BJ (cell line): ENCODE measurements at regions of chr3 and their contacts with region 1.

Region 1: GRCh38 chr3:138694287-138695007 is 85.9 kb downstream of the FAIM start:
- DNase-seq: peak; percentile 99
- H3K4me3 ChIP-seq: no peak overlapping the region
- H3K27me3 ChIP-seq: no peaks in the 10 kb centered on the region
- CTCF ChIP-seq: no peak

Region 2: DNA sequence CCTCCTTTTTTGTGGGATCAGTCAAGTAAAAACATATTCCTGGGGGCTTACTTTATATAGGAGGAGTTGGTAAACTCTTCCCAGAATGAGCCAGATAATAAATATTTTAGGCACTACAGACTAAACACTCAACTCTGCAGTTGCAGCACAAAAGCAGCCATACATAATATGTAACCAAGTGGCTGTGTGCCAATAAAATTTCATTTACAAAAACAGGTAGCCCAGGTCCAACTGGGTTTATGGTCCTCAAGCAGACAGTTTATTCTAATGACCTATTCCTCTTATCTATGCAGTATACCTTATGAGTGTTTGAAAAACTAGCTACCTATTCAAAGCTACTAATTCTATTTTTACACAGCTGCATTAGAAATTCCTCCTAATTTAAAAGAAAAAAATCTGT is 24.0 kb before region 1 on chr3:
- CTCF ChIA-PET with region 1: no interaction called
- POLR2A ChIA-PET with region 1: no interaction called
- DNase-seq: no peak
- H3K4me3 ChIP-seq: no peak overlapping the region
- H3K27me3 ChIP-seq: no peaks in the 10 kb centered on the region
- CTCF ChIP-seq: no peak

Region 3: GRCh38 chr3:138923531-138923994 is 229.1 kb after region 1 on chr3:
- CTCF ChIA-PET with region 1: interaction called, 191 read pairs
- POLR2A ChIA-PET with region 1: no interaction called
- DNase-seq: no peak
- H3K4me3 ChIP-seq: no peak overlapping the region
- H3K27me3 ChIP-seq: peaks cover 4% of the 10 kb centered on the region
- CTCF ChIP-seq: peak; percentile 91